ENCODE measurements at regions of chr17 and their contacts with region 1.

Region 1: DNA sequence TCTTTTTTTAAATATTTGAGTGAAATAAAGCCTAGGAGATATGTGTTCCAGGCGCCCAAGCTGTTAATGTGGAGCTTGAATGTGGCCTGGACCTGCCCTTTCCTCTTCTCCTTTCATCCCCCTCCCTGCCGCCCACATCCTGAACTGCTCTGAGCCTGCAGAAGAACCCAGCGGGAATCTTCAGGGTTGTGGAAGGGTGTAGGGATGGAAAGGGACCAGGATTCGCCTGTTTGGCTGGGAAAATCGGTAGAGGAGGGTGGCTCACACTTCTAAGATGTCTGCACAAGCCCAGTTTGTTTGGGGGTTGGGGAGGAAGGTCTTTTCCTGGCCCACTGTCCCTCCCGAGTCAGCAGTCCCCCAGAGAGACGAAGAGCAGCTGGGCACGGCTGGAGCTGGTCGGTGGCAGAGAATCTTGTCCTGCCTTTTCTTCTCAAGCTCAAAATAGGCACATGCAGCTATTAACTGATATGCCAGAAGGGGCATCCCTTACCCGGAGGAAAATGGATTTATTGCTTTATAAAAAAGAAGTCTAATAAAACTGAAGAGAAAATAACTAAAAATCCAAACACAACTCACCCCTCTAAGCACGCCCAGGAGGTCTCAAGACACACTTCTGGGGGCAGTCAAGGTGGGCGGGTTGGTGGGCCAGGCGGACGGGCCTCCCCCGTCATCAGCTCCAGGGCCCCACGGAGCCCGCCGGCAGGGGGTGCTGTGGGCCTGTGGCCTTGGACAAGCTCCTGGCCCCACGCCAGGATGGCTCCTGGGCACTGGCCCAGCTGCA is 11.5 kb upstream of the PITPNA start:
- DNase-seq: peak; percentile 87
- ATAC-seq: peak; percentile 66
- H3K4me3 Mint-ChIP-seq: no peak overlapping the region
- H3K27ac Mint-ChIP-seq: peak overlapping the region; percentile 90
- H3K4me1 Mint-ChIP-seq: peaks cover 44% of the 10 kb centered on the region
- H3K27me3 Mint-ChIP-seq: no peaks in the 10 kb centered on the region
- CTCF ChIP-seq: peak; percentile 84

Region 2: GRCh38 chr17:1509290-1509881 is 64.7 kb before region 1 on chr17:
- CTCF ChIA-PET with region 1: no interaction called
- POLR2A ChIA-PET with region 1: no interaction called
- DNase-seq: no peak
- ATAC-seq: no peak
- H3K4me3 Mint-ChIP-seq: no peak overlapping the region
- H3K27ac Mint-ChIP-seq: no peak overlapping the region
- H3K4me1 Mint-ChIP-seq: no peaks in the 10 kb centered on the region
- H3K27me3 Mint-ChIP-seq: no peaks in the 10 kb centered on the region
- CTCF ChIP-seq: no peak

Region 3: DNA sequence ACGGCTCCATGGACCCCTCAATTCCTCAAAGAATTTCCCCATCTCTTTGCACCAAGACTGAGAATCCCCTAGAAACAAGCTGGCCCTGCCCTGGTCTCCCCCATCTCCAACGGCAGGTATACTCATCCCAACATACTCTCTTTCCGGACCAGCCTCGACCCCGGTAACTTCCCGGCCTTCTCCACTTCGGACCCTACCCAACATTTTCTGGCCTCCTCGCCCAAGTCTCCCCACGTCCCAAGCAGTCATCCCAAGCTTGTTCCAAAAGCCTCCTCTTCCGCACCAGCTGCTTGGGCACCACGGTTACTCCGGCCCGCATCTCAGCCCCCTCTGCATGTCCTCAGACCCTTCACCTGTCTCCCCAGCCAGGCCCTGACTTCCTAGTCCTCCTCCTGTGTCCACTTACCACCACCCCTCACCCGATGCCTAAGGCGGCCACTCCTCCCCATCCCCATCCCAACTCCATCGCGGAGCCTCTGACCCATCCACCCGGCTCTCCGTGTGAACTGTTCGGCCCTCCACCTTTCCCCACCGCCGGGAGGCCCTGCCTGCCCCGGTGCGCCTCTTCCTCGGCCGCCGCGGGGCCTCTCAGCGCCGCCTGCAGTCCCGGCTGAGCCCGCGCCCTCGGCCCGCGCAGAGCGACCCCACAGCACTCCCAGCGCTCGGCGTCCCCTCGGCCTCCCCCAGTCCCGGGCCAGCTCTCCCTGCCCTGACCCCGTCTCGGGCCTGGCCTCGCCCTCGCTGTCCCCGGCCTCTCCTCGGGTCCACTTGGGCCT is 12.5 kb before region 1 on chr17:
- CTCF ChIA-PET with region 1: interaction called, 23 read pairs
- POLR2A ChIA-PET with region 1: no interaction called
- DNase-seq: peak; percentile 42
- ATAC-seq: peak; percentile 18
- H3K4me3 Mint-ChIP-seq: peak overlapping the region; percentile 84
- H3K27ac Mint-ChIP-seq: peak overlapping the region; percentile 29
- H3K4me1 Mint-ChIP-seq: peaks cover 33% of the 10 kb centered on the region
- H3K27me3 Mint-ChIP-seq: peaks cover 10% of the 10 kb centered on the region
- CTCF ChIP-seq: no peak

Region 4: DNA sequence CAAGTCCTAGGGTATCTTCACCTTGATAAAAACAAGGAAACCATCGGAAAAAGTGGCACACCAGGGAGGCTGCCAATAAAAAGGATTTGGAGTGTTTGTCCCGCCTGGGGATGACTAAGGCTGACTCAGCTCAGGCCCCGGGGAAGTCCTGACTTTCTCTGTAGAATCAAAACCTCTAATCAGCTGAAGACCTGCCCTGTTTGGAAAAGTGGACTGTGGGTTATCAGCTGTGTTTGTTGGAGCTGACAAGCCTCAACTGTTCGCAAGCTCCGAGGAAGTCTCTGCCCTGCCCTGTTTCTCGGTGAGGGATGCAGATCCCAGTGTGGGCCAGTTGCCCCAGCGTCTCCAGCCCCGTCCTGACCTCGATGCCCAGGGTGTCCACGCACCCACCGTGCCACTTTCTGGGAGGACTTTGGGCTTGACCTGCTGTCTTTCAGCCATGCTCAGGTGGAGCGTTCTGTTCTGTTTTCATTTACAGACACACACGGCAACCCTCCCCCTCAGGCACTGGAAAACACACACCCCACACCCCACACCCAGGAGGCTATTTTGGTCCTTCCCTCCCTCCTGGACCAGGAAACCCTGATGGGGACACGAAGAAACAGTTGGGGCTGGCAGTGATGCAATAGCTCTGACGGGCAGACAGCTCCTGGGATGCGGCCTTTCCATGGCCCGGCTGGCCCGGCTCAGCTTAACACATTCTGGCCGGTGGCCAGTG is 16.1 kb after region 1 on chr17:
- CTCF ChIA-PET with region 1: interaction called, 46 read pairs
- POLR2A ChIA-PET with region 1: interaction called, 5 read pairs
- DNase-seq: no peak
- ATAC-seq: no peak
- H3K4me3 Mint-ChIP-seq: no peak overlapping the region
- H3K27ac Mint-ChIP-seq: no peak overlapping the region
- H3K4me1 Mint-ChIP-seq: peaks cover 29% of the 10 kb centered on the region
- H3K27me3 Mint-ChIP-seq: no peaks in the 10 kb centered on the region
- CTCF ChIP-seq: no peak

Region 5: DNA sequence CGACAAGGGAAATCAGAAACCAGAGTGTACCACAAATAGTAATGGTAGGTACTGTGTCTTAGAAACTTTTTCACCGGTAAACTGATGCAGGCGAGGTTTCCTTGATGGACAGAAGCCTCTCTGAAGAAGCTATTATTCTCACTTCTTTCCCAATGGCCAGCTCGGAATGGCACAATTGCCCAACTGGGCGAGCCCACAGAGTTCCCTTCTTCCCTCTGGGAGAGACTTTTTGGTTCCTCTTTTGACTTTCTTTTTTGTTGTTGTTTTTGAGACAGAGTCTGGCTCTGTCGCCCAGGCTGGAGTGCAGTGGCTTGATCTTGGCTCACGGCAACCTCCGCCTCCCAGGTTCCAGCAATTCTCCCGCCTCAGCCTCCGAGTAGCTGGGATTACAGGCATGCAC is 37.6 kb after region 1 on chr17:
- CTCF ChIA-PET with region 1: interaction called, 16 read pairs
- POLR2A ChIA-PET with region 1: no interaction called
- DNase-seq: no peak
- ATAC-seq: no peak
- H3K4me3 Mint-ChIP-seq: no peak overlapping the region
- H3K27ac Mint-ChIP-seq: no peak overlapping the region; the same call in 1 of the 2 replicates
- H3K4me1 Mint-ChIP-seq: no peaks in the 10 kb centered on the region
- H3K27me3 Mint-ChIP-seq: no peaks in the 10 kb centered on the region
- CTCF ChIP-seq: no peak

Region 6: GRCh38 chr17:1628856-1629646 is 54.9 kb after region 1 on chr17:
- CTCF ChIA-PET with region 1: interaction called, 240 read pairs
- POLR2A ChIA-PET with region 1: interaction called, 11 read pairs
- DNase-seq: peak; percentile 97
- ATAC-seq: peak; percentile 67
- H3K4me3 Mint-ChIP-seq: peak overlapping the region; percentile 87
- H3K27ac Mint-ChIP-seq: peak overlapping the region; percentile 97
- H3K4me1 Mint-ChIP-seq: peaks cover 25% of the 10 kb centered on the region
- H3K27me3 Mint-ChIP-seq: peaks cover 19% of the 10 kb centered on the region
- CTCF ChIP-seq: no peak

Region 7: DNA sequence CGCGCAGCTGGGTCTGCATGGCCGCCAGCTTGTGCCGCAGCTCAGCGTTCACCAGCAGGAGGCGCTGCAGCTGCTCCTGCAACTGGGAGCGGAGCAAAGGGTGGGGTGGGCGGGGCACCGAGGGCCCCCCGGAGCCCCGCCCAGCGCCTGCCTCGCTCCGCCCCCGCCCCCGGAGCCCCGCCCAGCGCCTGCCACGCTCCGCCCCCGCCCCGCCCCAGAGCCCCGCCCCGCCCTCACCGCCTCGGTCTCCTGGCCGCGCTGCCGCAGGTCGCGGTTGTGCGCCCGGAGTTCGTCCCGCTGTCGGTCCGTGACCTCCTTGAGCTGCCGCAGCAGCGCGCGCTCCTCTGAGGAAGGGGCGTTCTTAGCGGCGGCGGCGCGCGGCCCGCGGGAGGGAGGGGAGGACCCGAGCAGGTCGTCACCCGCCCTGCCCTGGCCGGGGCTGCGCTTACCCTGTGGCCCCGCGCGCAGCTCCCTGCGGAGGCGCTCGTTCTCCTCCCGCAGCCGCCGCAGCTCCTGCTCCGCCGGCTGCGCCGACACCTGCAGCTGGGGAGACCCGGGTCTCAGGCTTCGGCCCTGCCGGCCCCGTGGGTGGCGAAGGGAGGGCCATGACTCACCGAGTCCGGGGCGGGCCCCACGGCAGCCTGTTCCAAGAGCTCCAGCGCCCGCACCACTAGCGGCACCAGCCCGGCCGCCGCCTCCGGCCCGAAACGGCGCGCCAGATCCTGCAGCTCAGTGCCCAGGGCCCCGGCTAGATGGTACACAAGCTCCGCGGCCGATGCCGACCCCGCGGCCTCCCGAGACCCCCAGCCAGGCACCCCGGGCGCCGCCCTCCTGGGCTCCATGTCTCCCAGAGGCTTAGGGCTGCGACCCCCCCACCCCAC is 75.1 kb after region 1 on chr17:
- CTCF ChIA-PET with region 1: interaction called, 133 read pairs
- POLR2A ChIA-PET with region 1: interaction called, 8 read pairs
- DNase-seq: peak; percentile 95
- ATAC-seq: peak; percentile 56
- H3K4me3 Mint-ChIP-seq: peak overlapping the region; percentile 72
- H3K27ac Mint-ChIP-seq: no peak overlapping the region
- H3K4me1 Mint-ChIP-seq: peaks cover 29% of the 10 kb centered on the region
- H3K27me3 Mint-ChIP-seq: peaks cover 3% of the 10 kb centered on the region
- CTCF ChIP-seq: peak; percentile 86; the same call in 1 of the 2 replicates

Measured in WTC11 (cell line).